CD4-positive, alpha-beta T cell (primary cell): ENCODE measurements at regions of chr12 and their contacts with region 1.

Region 1: GRCh38 chr12:53190108-53190729 is 9.5 kb upstream of the CSAD start:
- DNase-seq: peak in 13 of 14 experiments; percentile 33 to 78 (median 46)
- ATAC-seq: peak; percentile 98
- H3K4me3 ChIP-seq: no peak overlapping the region
- H3K4me3 Mint-ChIP-seq: no peak overlapping the region
- H3K27ac ChIP-seq: no peak overlapping the region
- H3K27ac Mint-ChIP-seq: peak overlapping the region; percentile 68
- H3K4me1 ChIP-seq: peaks cover 20% of the 10 kb centered on the region
- H3K4me1 Mint-ChIP-seq: peaks cover 32% of the 10 kb centered on the region
- H3K27me3 ChIP-seq: no peaks in the 10 kb centered on the region
- H3K27me3 Mint-ChIP-seq: no peaks in the 10 kb centered on the region
- CTCF ChIP-seq: peak; percentile 76

Region 2: DNA sequence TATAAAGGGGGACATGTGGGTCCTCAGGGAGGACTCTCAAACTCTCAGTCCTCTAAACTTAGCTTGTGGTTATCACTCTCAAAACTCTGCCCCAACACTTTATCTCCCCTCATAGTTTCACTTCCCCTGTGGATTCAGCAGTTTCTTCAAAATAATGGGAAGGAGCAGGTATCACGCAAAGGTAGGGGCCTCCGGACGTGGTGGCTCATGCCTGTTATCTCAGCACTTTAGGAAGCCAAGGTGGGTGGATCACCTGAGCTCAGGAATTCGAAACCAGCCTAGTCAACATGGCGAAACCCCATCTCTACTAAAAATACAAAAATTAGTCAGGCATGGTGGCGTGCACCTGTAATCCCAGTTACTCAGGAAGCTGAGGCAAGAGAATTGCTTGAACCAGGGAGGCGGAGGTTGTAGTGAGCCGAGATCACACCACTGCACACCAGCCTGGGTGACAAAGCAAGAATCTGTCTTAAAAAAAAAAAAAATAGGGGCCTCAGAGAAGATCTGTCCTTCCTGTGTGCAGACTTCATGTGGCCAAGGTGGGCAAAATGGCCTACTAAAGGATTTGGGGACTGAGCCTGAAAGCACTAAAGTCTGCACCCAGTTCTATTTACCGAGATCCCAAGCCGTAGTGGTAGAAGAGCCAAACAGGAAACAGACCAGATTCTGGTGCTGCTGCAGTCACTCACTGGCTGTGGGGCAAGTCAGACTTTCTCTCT is 10.4 kb after region 1 on chr12:
- CTCF ChIA-PET with region 1: interaction called, 4 read pairs
- POLR2A ChIA-PET with region 1: interaction called, 34 read pairs
- intact Hi-C with region 1: no loop called
- DNase-seq: peak in 4 of 14 experiments; percentile 40 to 53 (median 47)
- ATAC-seq: peak; percentile 53
- H3K4me3 ChIP-seq: peak overlapping the region; percentile 19
- H3K4me3 Mint-ChIP-seq: peak overlapping the region; percentile 86
- H3K27ac ChIP-seq: peak overlapping the region; percentile 31 to 63
- H3K27ac Mint-ChIP-seq: peak overlapping the region; percentile 88
- H3K4me1 ChIP-seq: peaks cover 89% of the 10 kb centered on the region
- H3K4me1 Mint-ChIP-seq: peaks cover 81% of the 10 kb centered on the region
- H3K27me3 ChIP-seq: no peaks in the 10 kb centered on the region
- H3K27me3 Mint-ChIP-seq: no peaks in the 10 kb centered on the region
- CTCF ChIP-seq: no peak

Region 3: GRCh38 chr12:53205747-53206419 is 15.7 kb after region 1 on chr12:
- CTCF ChIA-PET with region 1: interaction called, 3 read pairs
- POLR2A ChIA-PET with region 1: interaction called, 34 read pairs
- intact Hi-C with region 1: loop called in 1 of 2 experiments (anchors 2 kb)
- DNase-seq: peak in 11 of 14 experiments; percentile 31 to 75 (median 55)
- ATAC-seq: peak; percentile 43
- H3K4me3 ChIP-seq: peak overlapping the region; percentile 84
- H3K4me3 Mint-ChIP-seq: peak overlapping the region; percentile 84
- H3K27ac ChIP-seq: peak overlapping the region; percentile 70 to 82
- H3K27ac Mint-ChIP-seq: peak overlapping the region; percentile 73
- H3K4me1 ChIP-seq: peaks cover 90% of the 10 kb centered on the region
- H3K4me1 Mint-ChIP-seq: peaks cover 72% of the 10 kb centered on the region
- H3K27me3 ChIP-seq: no peaks in the 10 kb centered on the region
- H3K27me3 Mint-ChIP-seq: no peaks in the 10 kb centered on the region
- CTCF ChIP-seq: no peak